B cell (primary cell): ENCODE measurements at regions of chr10 and their contacts with region 1.

Region 1: GRCh38 chr10:102225646-102226541 is at the start of gene ELOVL3:
- DNase-seq: peak; percentile 85
- ATAC-seq: peak; percentile 89
- H3K4me3 ChIP-seq: peak within 1 kb of the TSS in 4 of 5 experiments; percentile 16 to 53 (median 36)
- H3K4me3 Mint-ChIP-seq: peak within 1 kb of the TSS; percentile 84
- H3K27ac ChIP-seq: no peak within 1 kb of the TSS
- H3K27ac Mint-ChIP-seq: no peak within 1 kb of the TSS
- H3K4me1 ChIP-seq: peaks cover 21 to 26% of the 10 kb centered on the region in 2 donors
- H3K4me1 Mint-ChIP-seq: peaks cover 25% of the 10 kb centered on the region
- H3K27me3 ChIP-seq: peaks cover 0 to 53% (median 36%) of the 10 kb centered on the region in 4 experiments
- H3K27me3 Mint-ChIP-seq: peaks cover 67% of the 10 kb centered on the region
- CTCF ChIP-seq: no peak
- total RNA-seq, gene ELOVL3: not detected in 2 replicates

Region 2: GRCh38 chr10:102167861-102168260 is 58.0 kb before region 1 on chr10:
- CTCF ChIA-PET with region 1: interaction called, 13 read pairs
- POLR2A ChIA-PET with region 1: no interaction called
- intact Hi-C with region 1: loop called (anchors 5 kb)
- DNase-seq: no peak
- ATAC-seq: no peak
- H3K4me3 ChIP-seq: no peak overlapping the region
- H3K4me3 Mint-ChIP-seq: no peak overlapping the region
- H3K27ac ChIP-seq: no peak overlapping the region
- H3K27ac Mint-ChIP-seq: no peak overlapping the region
- H3K4me1 ChIP-seq: peaks cover 7 to 8% of the 10 kb centered on the region in 2 donors
- H3K4me1 Mint-ChIP-seq: peaks cover 6% of the 10 kb centered on the region
- H3K27me3 ChIP-seq: no peaks in the 10 kb centered on the region
- H3K27me3 Mint-ChIP-seq: no peaks in the 10 kb centered on the region
- CTCF ChIP-seq: no peak

Region 3: GRCh38 chr10:102268375-102268888 is 42.5 kb after region 1 on chr10:
- CTCF ChIA-PET with region 1: interaction called, 10 read pairs
- POLR2A ChIA-PET with region 1: no interaction called
- intact Hi-C with region 1: no loop called
- DNase-seq: no peak
- ATAC-seq: no peak
- H3K4me3 ChIP-seq: no peak overlapping the region
- H3K4me3 Mint-ChIP-seq: no peak overlapping the region
- H3K27ac ChIP-seq: no peak overlapping the region
- H3K27ac Mint-ChIP-seq: peak overlapping the region; percentile 32
- H3K4me1 ChIP-seq: no peaks in the 10 kb centered on the region
- H3K4me1 Mint-ChIP-seq: peaks cover 20% of the 10 kb centered on the region
- H3K27me3 ChIP-seq: no peaks in the 10 kb centered on the region
- H3K27me3 Mint-ChIP-seq: no peaks in the 10 kb centered on the region
- CTCF ChIP-seq: no peak

Region 4: GRCh38 chr10:102352066-102352715 is 126.3 kb after region 1 on chr10:
- CTCF ChIA-PET with region 1: interaction called, 391 read pairs
- POLR2A ChIA-PET with region 1: interaction called, 3 read pairs
- intact Hi-C with region 1: loop called (anchors 1 kb)
- DNase-seq: peak; percentile 78
- ATAC-seq: peak; percentile 56
- H3K4me3 ChIP-seq: no peak overlapping the region
- H3K4me3 Mint-ChIP-seq: no peak overlapping the region
- H3K27ac ChIP-seq: no peak overlapping the region
- H3K27ac Mint-ChIP-seq: no peak overlapping the region
- H3K4me1 ChIP-seq: no peaks in the 10 kb centered on the region
- H3K4me1 Mint-ChIP-seq: no peaks in the 10 kb centered on the region
- H3K27me3 ChIP-seq: no peaks in the 10 kb centered on the region
- H3K27me3 Mint-ChIP-seq: no peaks in the 10 kb centered on the region
- CTCF ChIP-seq: peak; percentile 90

Region 5: DNA sequence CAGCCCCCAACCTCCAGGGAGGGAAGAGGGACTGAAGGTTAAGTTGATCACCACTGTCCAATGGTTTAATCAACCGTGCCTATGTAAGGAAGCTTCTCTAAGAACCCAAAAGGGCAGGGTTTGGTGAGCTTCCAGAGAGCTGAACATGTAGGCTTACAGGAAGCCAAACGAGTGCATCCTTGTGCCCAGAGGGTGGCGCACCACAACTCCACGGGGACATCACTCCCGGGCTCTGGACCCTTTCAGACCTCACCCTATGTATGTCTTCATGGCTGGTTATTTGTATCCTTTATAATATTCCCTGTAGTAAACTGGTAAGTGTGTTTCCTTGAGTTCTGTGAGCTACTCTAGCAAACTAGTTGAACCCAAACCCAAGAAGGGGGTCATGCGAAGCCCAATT is 158.2 kb after region 1 on chr10:
- CTCF ChIA-PET with region 1: interaction called, 12 read pairs
- POLR2A ChIA-PET with region 1: no interaction called
- intact Hi-C with region 1: no loop called
- DNase-seq: no peak
- ATAC-seq: no peak
- H3K4me3 ChIP-seq: no peak overlapping the region
- H3K4me3 Mint-ChIP-seq: no peak overlapping the region
- H3K27ac ChIP-seq: no peak overlapping the region
- H3K27ac Mint-ChIP-seq: no peak overlapping the region
- H3K4me1 ChIP-seq: peaks cover 0 to 8% of the 10 kb centered on the region in 2 donors
- H3K4me1 Mint-ChIP-seq: peaks cover 12% of the 10 kb centered on the region
- H3K27me3 ChIP-seq: no peaks in the 10 kb centered on the region
- H3K27me3 Mint-ChIP-seq: no peaks in the 10 kb centered on the region
- CTCF ChIP-seq: no peak

Region 6: DNA sequence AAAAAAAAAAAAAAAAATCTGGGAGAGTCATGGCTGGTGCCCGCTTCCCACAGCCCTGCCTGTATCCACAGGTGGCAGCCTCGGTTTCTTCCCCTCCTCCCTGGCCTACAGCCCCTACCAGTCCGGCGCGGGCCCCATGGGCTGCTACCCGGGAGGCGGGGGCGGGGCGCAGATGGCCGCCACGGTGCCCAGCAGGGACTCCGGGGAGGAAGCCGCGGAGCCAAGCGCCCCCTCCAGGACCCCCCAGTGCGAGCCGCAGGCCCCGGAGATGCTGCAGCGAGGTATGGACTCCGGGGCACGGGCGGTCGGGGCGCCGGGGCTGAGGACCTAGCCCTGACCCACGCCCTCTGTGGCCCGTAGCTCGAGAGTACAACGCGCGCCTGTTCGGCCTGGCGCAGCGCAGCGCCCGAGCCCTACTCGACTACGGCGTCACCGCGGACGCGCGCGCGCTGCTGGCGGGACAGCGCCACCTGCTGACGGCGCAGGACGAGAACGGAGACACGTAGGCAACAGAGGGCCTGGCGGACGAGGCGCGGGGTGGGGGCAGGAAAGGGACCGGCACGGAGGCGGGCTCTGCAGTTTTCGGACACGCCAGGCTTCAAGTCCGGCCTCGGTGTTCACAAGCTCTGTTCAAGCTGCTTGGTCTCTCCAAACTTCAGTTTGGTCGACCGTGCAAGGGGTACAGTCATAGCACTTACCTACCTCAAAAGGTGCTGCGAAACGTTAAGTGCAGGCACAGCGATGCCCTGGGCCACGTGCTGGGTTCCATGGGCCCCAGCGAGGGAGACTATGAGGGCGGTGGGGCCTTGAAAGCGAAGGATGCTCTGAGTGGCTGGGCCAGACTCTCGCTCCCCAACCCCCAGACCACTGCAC is 173.6 kb after region 1 on chr10:
- CTCF ChIA-PET with region 1: interaction called, 33 read pairs
- POLR2A ChIA-PET with region 1: no interaction called
- intact Hi-C with region 1: loop called (anchors 1 kb)
- DNase-seq: peak; percentile 94
- ATAC-seq: peak; percentile 39
- H3K4me3 ChIP-seq: peak overlapping the region in 4 of 5 experiments; percentile 29 to 53 (median 49)
- H3K4me3 Mint-ChIP-seq: peak overlapping the region; percentile 95
- H3K27ac ChIP-seq: peak overlapping the region; percentile 74 to 80
- H3K27ac Mint-ChIP-seq: peak overlapping the region; percentile 92
- H3K4me1 ChIP-seq: peaks cover 36 to 46% of the 10 kb centered on the region in 2 donors
- H3K4me1 Mint-ChIP-seq: peaks cover 46% of the 10 kb centered on the region
- H3K27me3 ChIP-seq: no peaks in the 10 kb centered on the region
- H3K27me3 Mint-ChIP-seq: no peaks in the 10 kb centered on the region
- CTCF ChIP-seq: peak; percentile 94

Region 7: GRCh38 chr10:102484021-102484420 is 258.1 kb after region 1 on chr10:
- CTCF ChIA-PET with region 1: interaction called, 57 read pairs
- POLR2A ChIA-PET with region 1: no interaction called
- intact Hi-C with region 1: loop called (anchors 1 kb)
- DNase-seq: no peak
- ATAC-seq: no peak
- H3K4me3 ChIP-seq: no peak overlapping the region
- H3K4me3 Mint-ChIP-seq: no peak overlapping the region
- H3K27ac ChIP-seq: no peak overlapping the region
- H3K27ac Mint-ChIP-seq: no peak overlapping the region
- H3K4me1 ChIP-seq: peaks cover 0 to 3% of the 10 kb centered on the region in 2 donors
- H3K4me1 Mint-ChIP-seq: peaks cover 3% of the 10 kb centered on the region
- H3K27me3 ChIP-seq: no peaks in the 10 kb centered on the region
- H3K27me3 Mint-ChIP-seq: no peaks in the 10 kb centered on the region
- CTCF ChIP-seq: no peak